B cell (primary cell): ENCODE measurements at regions of chr12 and their contacts with region 1.

Region 1: DNA sequence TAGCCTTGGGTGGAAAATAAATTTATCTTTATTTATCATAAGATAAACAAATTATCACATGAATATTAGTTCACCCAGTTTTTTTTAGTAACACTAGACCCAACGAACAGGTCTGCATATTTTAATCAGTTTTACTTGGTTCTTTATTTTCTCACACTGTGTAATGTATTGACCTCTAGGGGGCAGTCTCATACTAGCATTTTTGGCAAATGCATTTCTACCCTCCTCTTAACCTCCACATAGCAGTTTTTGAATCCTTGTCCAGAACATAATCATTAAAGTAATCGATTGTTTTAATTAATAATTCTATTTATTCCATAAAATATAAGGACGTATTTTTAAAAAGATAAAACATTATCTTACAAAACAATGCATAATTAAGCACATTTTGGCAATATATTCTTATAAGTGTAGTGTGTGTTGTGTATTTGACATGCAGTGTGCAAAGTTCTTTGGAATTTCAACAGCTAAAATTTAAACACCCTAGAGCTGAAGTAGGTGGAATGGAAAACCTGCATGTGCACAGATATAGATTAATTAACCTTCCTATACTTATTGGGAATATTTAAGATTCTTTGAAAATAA is 31.6 kb upstream of the PTPRQ start:
- DNase-seq: peak; percentile 17
- ATAC-seq: no peak
- H3K4me3 ChIP-seq: no peak overlapping the region
- H3K4me3 Mint-ChIP-seq: no peak overlapping the region
- H3K27ac ChIP-seq: no peak overlapping the region
- H3K27ac Mint-ChIP-seq: no peak overlapping the region
- H3K4me1 ChIP-seq: no peaks in the 10 kb centered on the region
- H3K4me1 Mint-ChIP-seq: no peaks in the 10 kb centered on the region
- H3K27me3 ChIP-seq: no peaks in the 10 kb centered on the region
- H3K27me3 Mint-ChIP-seq: no peaks in the 10 kb centered on the region
- CTCF ChIP-seq: peak; percentile 27

Region 2: GRCh38 chr12:80763874-80764273 is 351.4 kb after region 1 on chr12:
- CTCF ChIA-PET with region 1: no interaction called
- POLR2A ChIA-PET with region 1: no interaction called
- intact Hi-C with region 1: loop called (anchors 5 kb)
- DNase-seq: peak; percentile 1
- ATAC-seq: no peak
- H3K4me3 ChIP-seq: no peak overlapping the region
- H3K4me3 Mint-ChIP-seq: no peak overlapping the region
- H3K27ac ChIP-seq: no peak overlapping the region
- H3K27ac Mint-ChIP-seq: no peak overlapping the region
- H3K4me1 ChIP-seq: no peaks in the 10 kb centered on the region
- H3K4me1 Mint-ChIP-seq: peaks cover 5% of the 10 kb centered on the region
- H3K27me3 ChIP-seq: no peaks in the 10 kb centered on the region
- H3K27me3 Mint-ChIP-seq: no peaks in the 10 kb centered on the region
- CTCF ChIP-seq: peak; percentile 22